ENCODE measurements at regions of chr3 and their contacts with region 1.

Region 1: GRCh38 chr3:123652346-123652984 is 67.6 kb upstream of the HACD2 start:
- DNase-seq: peak; percentile 35
- H3K4me3 ChIP-seq: no peak overlapping the region
- H3K27ac ChIP-seq: no peak overlapping the region
- H3K4me1 ChIP-seq: peaks cover 14% of the 10 kb centered on the region
- H3K27me3 ChIP-seq: no peaks in the 10 kb centered on the region
- CTCF ChIP-seq: peak; percentile 73 to 90

Region 2: DNA sequence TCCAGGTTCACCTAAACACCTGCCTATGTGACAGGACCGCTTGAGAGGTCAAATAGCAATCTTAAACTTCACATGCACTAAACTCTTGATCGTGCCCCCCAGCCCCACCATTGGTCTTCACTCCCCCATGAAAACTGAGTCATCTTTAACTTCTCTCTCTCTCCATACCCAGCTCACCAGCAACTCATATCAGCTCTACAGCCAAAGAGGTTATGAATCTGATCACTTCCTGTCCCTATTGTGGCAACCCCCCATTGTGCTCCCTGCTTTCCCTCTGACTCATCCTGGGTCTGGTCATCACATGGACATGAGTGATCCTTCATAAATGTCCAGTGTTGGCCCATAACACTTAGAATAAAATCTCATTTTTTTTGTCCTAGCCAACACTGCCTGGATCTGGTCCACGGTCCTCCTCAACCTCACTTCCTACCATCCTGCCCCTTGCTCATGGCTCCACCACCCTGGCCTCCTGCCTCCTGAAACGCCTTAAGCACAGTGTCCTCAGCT is 35.8 kb after region 1 on chr3:
- CTCF ChIA-PET with region 1: no interaction called
- dilution Hi-C with region 1: no loop called
- in situ Hi-C with region 1: loop called in 1 of 2 experiments (anchors 5 kb)
- intact Hi-C with region 1: no loop called
- DNase-seq: peak; percentile 90
- H3K4me3 ChIP-seq: no peak overlapping the region
- H3K27ac ChIP-seq: peak overlapping the region; percentile 5
- H3K4me1 ChIP-seq: peaks cover 20% of the 10 kb centered on the region
- H3K27me3 ChIP-seq: no peaks in the 10 kb centered on the region
- CTCF ChIP-seq: no peak

Region 3: GRCh38 chr3:123702720-123703119 is 50.3 kb after region 1 on chr3:
- CTCF ChIA-PET with region 1: interaction called, 3 read pairs
- dilution Hi-C with region 1: no loop called
- in situ Hi-C with region 1: no loop called
- intact Hi-C with region 1: loop called (anchors 1 kb)
- DNase-seq: no peak
- H3K4me3 ChIP-seq: no peak overlapping the region
- H3K27ac ChIP-seq: no peak overlapping the region
- H3K4me1 ChIP-seq: no peaks in the 10 kb centered on the region
- H3K27me3 ChIP-seq: no peaks in the 10 kb centered on the region
- CTCF ChIP-seq: no peak

Region 4: GRCh38 chr3:123723522-123724168 is 71.2 kb after region 1 on chr3:
- CTCF ChIA-PET with region 1: interaction called, 3 read pairs
- dilution Hi-C with region 1: no loop called
- in situ Hi-C with region 1: loop called in 1 of 2 experiments (anchors 10 kb)
- intact Hi-C with region 1: loop called (anchors 1 kb)
- DNase-seq: peak; percentile 66
- H3K4me3 ChIP-seq: no peak overlapping the region
- H3K27ac ChIP-seq: no peak overlapping the region
- H3K4me1 ChIP-seq: peaks cover 7% of the 10 kb centered on the region
- H3K27me3 ChIP-seq: no peaks in the 10 kb centered on the region
- CTCF ChIP-seq: peak; percentile 87 to 92

Region 5: GRCh38 chr3:123984957-123985356 is 332.5 kb after region 1 on chr3:
- CTCF ChIA-PET with region 1: no interaction called
- dilution Hi-C with region 1: no loop called
- in situ Hi-C with region 1: no loop called
- intact Hi-C with region 1: loop called (anchors 1 kb)
- DNase-seq: no peak
- H3K4me3 ChIP-seq: no peak overlapping the region
- H3K27ac ChIP-seq: no peak overlapping the region
- H3K4me1 ChIP-seq: peaks cover 4% of the 10 kb centered on the region
- H3K27me3 ChIP-seq: peaks cover 7% of the 10 kb centered on the region
- CTCF ChIP-seq: no peak

Region 6: DNA sequence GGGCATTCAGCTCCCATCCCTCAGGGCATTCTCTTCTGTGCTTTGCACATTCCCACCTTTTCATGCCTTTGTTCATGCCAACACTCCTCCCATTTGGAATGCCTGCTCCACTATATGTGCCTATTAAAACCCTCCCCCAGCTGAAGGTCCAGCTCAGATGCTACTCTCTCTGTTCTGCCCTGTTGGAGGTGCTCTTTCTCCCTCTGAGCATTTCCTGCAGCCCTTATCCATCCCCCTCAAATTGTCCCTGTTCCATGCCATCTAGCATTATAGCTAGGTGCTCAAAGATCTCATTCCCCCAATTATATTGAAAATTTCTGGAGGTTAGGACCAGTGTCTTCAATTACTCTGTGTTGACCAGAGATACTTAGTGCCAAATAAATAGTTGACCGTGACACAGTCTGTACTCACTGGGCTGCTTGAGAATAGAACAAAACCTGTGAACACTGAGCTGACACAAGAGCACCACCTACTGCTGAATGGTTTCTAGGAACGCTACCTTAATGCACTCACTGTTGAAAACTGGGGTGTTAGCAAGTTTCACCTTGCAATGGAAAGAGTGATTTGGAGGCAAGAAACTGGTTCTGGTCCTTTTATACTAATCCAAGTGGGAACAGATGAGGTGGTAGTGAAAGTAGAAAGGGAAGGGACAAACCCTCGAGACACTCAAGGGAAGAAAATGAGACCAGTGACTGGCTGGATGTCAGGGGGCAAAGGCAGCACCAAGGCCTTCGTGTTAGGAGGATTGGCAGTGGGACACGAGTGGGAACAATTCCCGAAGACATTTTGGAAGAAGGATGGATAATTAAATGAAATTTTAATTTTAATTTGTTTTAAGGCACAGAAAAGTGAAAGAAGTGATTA is 629.2 kb after region 1 on chr3:
- CTCF ChIA-PET with region 1: no interaction called
- dilution Hi-C with region 1: no loop called
- in situ Hi-C with region 1: no loop called
- intact Hi-C with region 1: loop called (anchors 5 kb)
- DNase-seq: peak; percentile 41
- H3K4me3 ChIP-seq: no peak overlapping the region
- H3K27ac ChIP-seq: no peak overlapping the region
- H3K4me1 ChIP-seq: peaks cover 9% of the 10 kb centered on the region
- H3K27me3 ChIP-seq: no peaks in the 10 kb centered on the region
- CTCF ChIP-seq: peak; percentile 66 to 77